SK-N-SH (cell line): ENCODE measurements at regions of chr1 and their contacts with region 1.

Region 1: GRCh38 chr1:17393230-17393629 is 21.2 kb downstream of the PADI6 start:
- DNase-seq: no peak
- H3K4me3 ChIP-seq: no peak overlapping the region
- H3K27ac ChIP-seq: no peak overlapping the region
- H3K4me1 ChIP-seq: no peaks in the 10 kb centered on the region
- H3K27me3 ChIP-seq: peaks cover 20% of the 10 kb centered on the region; the same call in 1 of the 2 replicates
- CTCF ChIP-seq: no peak
- EP300 ChIP-seq: no peak
- RAD21 ChIP-seq: no peak

Region 2: DNA sequence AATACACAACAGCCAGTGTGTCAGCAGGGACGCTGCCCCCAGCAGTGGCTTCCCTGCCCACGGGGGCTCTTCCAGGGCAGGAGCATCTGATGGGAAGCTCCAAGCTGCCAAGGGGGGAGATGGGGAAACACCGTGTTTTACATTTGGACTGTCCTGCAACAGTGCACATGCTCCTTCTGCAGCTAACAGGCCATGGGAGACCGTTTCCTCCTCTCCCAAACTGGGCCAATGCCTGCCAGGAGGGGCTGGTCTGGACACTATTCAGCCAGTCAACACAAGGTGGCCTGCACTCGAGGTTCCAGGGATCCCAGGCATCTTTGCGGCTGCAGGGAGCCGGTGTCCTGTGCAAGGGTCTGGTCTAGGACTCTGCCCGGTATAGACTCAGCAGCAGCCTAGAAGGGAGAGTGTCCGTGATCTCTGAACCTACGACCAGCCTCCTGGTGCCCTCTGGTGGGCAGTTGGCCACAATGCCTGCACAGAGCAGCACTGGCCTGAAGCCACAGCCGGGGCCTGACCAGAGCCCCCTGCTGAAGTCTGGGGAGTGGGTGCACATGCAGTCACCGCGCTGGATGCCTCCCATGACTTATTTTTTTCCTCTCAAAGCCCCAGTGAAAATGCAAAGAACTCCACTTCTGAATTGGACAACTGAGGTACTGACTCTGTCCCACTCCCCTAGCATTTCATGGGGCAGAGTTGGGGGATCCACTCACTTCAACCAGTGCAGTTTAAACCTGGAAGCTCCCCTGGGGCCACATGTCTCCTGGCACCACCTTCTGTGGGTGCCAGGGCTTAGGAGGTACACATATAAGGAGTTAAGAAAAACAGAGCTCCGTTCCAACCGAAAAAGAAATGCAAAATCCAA is 12.9 kb after region 1 on chr1:
- CTCF ChIA-PET with region 1: interaction called, 11 read pairs
- POLR2A ChIA-PET with region 1: no interaction called
- DNase-seq: peak; percentile 90
- H3K4me3 ChIP-seq: no peak overlapping the region
- H3K27ac ChIP-seq: no peak overlapping the region; a peak in 1 of 4 replicates
- H3K4me1 ChIP-seq: peaks cover 0 to 8% of the 10 kb centered on the region in 2 experiments; a peak in 1 of 4 replicates
- H3K27me3 ChIP-seq: no peaks in the 10 kb centered on the region
- CTCF ChIP-seq: peak; percentile 81
- EP300 ChIP-seq: no peak
- RAD21 ChIP-seq: peak; percentile 71